CD8-positive, alpha-beta T cell (primary cell): ENCODE measurements at regions of chr16 and their contacts with region 1.

Region 1: DNA sequence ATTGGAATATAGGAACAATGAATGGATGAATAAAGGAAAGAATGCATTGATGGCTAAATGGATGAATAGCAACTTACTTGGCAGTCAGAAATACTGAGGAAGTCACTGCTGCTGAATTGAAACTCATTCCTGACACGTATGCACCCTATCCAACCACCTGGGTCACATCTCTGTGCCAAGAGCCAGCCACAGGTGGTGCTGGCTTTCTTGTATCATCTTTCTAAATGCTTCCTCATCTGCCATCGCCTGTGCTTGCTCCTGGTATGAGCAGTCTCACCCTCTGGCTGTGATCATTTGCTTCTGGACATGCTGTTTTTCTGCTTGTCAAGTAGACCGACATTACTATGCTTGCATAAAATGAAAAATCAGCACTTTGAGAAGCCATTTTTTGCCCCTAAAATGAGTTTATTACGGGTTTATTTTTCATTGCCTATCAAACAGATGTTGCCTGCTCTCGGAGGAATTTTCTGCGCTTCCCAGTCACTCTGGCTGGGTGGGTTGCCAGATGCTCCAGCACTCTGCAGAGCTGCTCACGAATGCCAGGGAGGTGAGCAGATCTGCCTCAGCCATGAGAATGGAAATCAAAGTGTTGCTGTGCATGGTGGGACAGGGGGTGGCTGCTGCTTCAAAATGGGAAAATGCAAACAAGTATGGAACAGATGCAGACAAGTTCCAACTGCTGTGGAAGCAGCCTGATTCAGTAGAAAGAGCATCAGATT is 1349.6 kb upstream of the CDH8 start:
- DNase-seq: no peak
- ATAC-seq: no peak
- H3K4me3 ChIP-seq: no peak overlapping the region
- H3K4me3 Mint-ChIP-seq: no peak overlapping the region
- H3K27ac ChIP-seq: no peak overlapping the region
- H3K27ac Mint-ChIP-seq: no peak overlapping the region
- H3K4me1 ChIP-seq: no peaks in the 10 kb centered on the region
- H3K4me1 Mint-ChIP-seq: no peaks in the 10 kb centered on the region
- H3K27me3 ChIP-seq: no peaks in the 10 kb centered on the region
- H3K27me3 Mint-ChIP-seq: no peaks in the 10 kb centered on the region
- CTCF ChIP-seq: no peak

Region 2: GRCh38 chr16:63458846-63459245 is 73.0 kb after region 1 on chr16:
- CTCF ChIA-PET with region 1: no interaction called
- POLR2A ChIA-PET with region 1: no interaction called
- intact Hi-C with region 1: loop called in 1 of 2 experiments (anchors 10 kb)
- DNase-seq: no peak
- ATAC-seq: no peak
- H3K4me3 ChIP-seq: no peak overlapping the region
- H3K4me3 Mint-ChIP-seq: no peak overlapping the region
- H3K27ac ChIP-seq: no peak overlapping the region
- H3K27ac Mint-ChIP-seq: no peak overlapping the region
- H3K4me1 ChIP-seq: no peaks in the 10 kb centered on the region
- H3K4me1 Mint-ChIP-seq: no peaks in the 10 kb centered on the region
- H3K27me3 ChIP-seq: no peaks in the 10 kb centered on the region
- H3K27me3 Mint-ChIP-seq: no peaks in the 10 kb centered on the region
- CTCF ChIP-seq: no peak